Lower lobe of right lung (tissue), 2 donors: ENCODE measurements at regions of chr5 and their contacts with region 1.

Region 1: GRCh38 chr5:149979896-149980295 is 19.3 kb downstream of the SLC26A2 start:
- DNase-seq: no peak
- ATAC-seq: no peak
- H3K4me3 ChIP-seq: no peak overlapping the region
- H3K27ac ChIP-seq: no peak overlapping the region
- H3K4me1 ChIP-seq: no peaks in the 10 kb centered on the region
- H3K27me3 ChIP-seq: no peaks in the 10 kb centered on the region
- CTCF ChIP-seq: no peak

Region 2: DNA sequence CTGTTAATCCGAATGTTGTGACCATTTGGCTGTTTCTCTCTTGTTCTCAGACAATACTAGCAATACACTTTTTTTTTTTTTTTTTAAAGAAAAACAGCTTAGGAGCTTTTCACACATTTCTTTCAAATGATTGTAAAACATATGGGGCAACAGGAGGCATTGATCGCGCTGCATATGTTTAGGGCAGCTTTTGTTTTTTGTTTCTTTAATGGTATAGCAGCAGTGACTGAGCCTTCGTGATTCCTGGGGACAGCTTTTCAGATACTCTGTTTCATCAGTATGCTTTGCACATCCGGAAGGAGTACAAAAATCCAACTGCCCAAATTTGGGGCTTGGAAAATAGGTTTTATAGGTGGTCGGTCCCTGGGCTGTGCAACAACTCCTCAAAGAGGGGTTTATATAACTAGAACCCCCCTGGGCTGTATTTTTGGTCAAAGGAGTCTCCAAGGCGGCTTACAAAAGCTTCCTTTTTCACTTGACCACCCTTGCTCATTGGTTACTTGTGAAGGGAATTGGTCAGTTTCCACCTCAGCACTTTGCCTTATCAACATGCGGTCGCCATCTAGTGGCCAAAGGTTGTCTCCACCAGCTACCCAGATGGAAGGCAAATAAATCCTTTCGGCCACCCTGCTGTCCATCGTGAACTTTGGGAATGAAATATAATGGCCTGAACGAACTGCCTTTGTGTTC is 127.1 kb before region 1 on chr5:
- intact Hi-C with region 1: loop called (anchors 10 kb)
- DNase-seq: peak; percentile 74
- ATAC-seq: peak; percentile 70 to 80
- H3K4me3 ChIP-seq: no peak overlapping the region
- H3K27ac ChIP-seq: no peak overlapping the region
- H3K4me1 ChIP-seq: peaks cover 20% of the 10 kb centered on the region
- H3K27me3 ChIP-seq: no peaks in the 10 kb centered on the region
- CTCF ChIP-seq: peak; percentile 91

Region 3: DNA sequence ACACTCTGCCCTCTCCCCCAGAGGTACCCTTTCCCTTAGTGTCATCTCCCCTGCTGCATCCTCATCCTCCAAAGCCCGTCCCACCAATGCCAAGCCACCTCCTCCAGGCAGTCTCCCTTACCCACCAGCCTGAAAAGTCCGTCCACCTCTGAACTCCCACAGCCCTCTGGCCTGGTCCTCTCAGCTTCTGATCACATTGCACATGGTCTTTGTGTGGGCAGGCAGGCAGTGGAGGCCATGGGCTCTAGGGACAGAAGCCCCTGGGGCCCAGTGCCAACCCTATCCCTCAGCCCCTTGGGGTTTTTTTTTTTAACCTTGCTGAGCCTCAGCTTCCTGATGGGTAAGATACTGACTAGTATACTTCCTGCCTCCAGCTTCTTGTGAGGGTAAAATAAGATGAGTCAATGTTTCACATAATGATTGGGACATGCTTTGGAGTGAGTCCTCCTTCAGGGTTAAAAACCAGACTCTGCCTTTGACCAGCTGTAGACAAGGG is 87.1 kb after region 1 on chr5:
- intact Hi-C with region 1: no loop called
- DNase-seq: no peak
- ATAC-seq: peak in 1 of 2 donors; percentile 14
- H3K4me3 ChIP-seq: no peak overlapping the region
- H3K27ac ChIP-seq: no peak overlapping the region
- H3K4me1 ChIP-seq: peaks cover 16% of the 10 kb centered on the region
- H3K27me3 ChIP-seq: no peaks in the 10 kb centered on the region
- CTCF ChIP-seq: no peak

Region 4: GRCh38 chr5:150153957-150154617 is 174.2 kb after region 1 on chr5:
- intact Hi-C with region 1: no loop called
- DNase-seq: no peak
- ATAC-seq: peak; percentile 4 to 9
- H3K4me3 ChIP-seq: peak overlapping the region; percentile 54
- H3K27ac ChIP-seq: peak overlapping the region; percentile 70
- H3K4me1 ChIP-seq: peaks cover 25% of the 10 kb centered on the region
- H3K27me3 ChIP-seq: no peaks in the 10 kb centered on the region
- CTCF ChIP-seq: no peak

Region 5: GRCh38 chr5:150167908-150168307 is 188.0 kb after region 1 on chr5:
- intact Hi-C with region 1: no loop called
- DNase-seq: no peak
- ATAC-seq: no peak
- H3K4me3 ChIP-seq: no peak overlapping the region
- H3K27ac ChIP-seq: no peak overlapping the region
- H3K4me1 ChIP-seq: peaks cover 18% of the 10 kb centered on the region
- H3K27me3 ChIP-seq: peaks cover 23% of the 10 kb centered on the region
- CTCF ChIP-seq: no peak

Region 6: GRCh38 chr5:150258130-150258529 is 278.2 kb after region 1 on chr5:
- intact Hi-C with region 1: no loop called
- DNase-seq: no peak
- ATAC-seq: no peak
- H3K4me3 ChIP-seq: no peak overlapping the region
- H3K27ac ChIP-seq: no peak overlapping the region
- H3K4me1 ChIP-seq: no peaks in the 10 kb centered on the region
- H3K27me3 ChIP-seq: peaks cover 3% of the 10 kb centered on the region
- CTCF ChIP-seq: no peak